Naive thymus-derived CD4-positive, alpha-beta T cell (primary cell): ENCODE measurements at regions of chr6 and their contacts with region 1.

Region 1: DNA sequence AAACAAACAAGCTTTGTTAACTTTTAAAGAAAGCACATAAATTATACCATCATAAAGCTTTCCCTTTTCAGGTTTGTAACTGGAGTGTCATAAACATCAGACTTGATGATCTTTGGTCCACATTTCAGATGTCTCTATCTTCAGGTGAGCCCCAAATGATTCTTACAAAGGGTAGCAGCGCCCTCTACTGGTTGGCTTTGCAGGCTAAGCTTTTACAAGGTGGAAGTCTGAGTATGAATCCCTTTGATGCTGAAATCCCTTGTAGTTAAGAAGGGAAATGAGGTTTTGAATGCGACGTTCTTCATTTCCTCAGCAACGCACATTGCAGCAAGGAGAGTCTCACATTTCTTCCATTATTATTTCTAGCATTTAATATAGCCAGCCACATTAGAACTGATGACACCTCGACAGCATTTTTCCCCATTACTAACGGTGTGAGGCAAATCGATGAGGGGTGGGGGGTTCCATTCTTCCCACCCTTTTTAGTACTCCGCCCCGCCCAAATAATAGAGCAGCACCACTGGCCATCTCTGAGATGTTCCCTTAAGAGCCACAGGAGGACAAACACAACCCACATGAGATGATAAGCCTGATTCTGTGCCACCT is 126.3 kb upstream of the NT5E start:
- DNase-seq: peak; percentile 17 to 67 (median 42)
- ATAC-seq: peak; percentile 54
- H3K4me3 ChIP-seq: no peak overlapping the region
- H3K4me3 Mint-ChIP-seq: no peak overlapping the region
- H3K27ac ChIP-seq: no peak overlapping the region
- H3K27ac Mint-ChIP-seq: peak overlapping the region in 1 of 9 donors; percentile 26
- H3K4me1 ChIP-seq: no peaks in the 10 kb centered on the region
- H3K4me1 Mint-ChIP-seq: peaks cover 0 to 5% (median 0%) of the 10 kb centered on the region in 7 donors
- H3K27me3 ChIP-seq: no peaks in the 10 kb centered on the region
- H3K27me3 Mint-ChIP-seq: peaks cover 0 to 16% (median 10%) of the 10 kb centered on the region in 5 donors

Region 2: DNA sequence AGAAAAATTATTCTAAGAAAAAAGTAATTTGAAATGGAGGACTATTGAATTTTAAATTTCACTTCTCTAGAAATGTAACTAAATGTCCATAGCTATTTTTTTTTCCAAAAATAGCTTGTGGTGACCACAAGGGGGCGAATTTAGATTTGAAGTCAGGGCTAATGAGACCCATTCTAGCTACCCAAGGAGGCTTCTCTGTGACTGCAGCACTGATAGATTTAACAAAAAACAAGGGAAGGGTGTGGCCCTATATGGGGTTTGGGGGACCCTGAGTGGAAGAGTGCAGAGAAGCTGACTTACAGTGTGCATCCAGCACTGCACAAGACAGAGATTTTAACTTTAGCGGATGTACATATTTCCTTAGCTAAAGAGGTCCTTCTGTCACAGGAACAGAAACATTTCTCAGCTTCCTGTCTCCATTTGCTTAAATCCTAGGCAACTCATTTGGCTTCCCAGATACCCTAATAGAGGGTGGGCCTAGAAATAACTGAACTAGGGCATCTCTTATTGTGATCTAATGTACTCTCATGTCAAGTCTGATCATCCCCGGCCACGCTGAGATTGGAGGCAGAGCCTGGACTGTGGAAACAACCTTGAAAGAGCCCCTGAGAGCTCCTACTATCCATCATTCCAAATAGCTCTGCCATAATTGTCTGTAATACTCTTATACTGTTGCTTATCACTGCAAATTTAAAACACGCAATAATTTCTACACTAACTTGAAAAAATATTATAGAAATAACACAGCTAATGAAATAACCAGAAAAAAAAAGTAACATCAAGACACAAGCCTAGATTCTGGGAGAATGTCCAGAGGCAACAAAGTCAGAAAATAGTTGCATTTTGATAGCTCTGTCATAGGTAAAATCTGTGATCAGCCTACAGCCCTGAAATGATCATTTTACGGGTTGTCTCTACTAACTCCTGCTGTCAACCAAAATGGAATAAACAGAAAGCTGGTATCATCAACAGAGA is 1708.2 kb before region 1 on chr6:
- CTCF ChIA-PET with region 1: interaction called, 4 read pairs
- POLR2A ChIA-PET with region 1: no interaction called
- intact Hi-C with region 1: loop called in 1 of 2 experiments (anchors 1 kb)
- DNase-seq: peak in 1 of 9 donors; percentile 2
- ATAC-seq: no peak
- H3K4me3 ChIP-seq: no peak overlapping the region
- H3K4me3 Mint-ChIP-seq: no peak overlapping the region
- H3K27ac ChIP-seq: no peak overlapping the region
- H3K27ac Mint-ChIP-seq: no peak overlapping the region
- H3K4me1 ChIP-seq: no peaks in the 10 kb centered on the region
- H3K4me1 Mint-ChIP-seq: no peaks in the 10 kb centered on the region
- H3K27me3 ChIP-seq: no peaks in the 10 kb centered on the region
- H3K27me3 Mint-ChIP-seq: peaks cover 0 to 6% (median 0%) of the 10 kb centered on the region in 5 donors

Region 3: DNA sequence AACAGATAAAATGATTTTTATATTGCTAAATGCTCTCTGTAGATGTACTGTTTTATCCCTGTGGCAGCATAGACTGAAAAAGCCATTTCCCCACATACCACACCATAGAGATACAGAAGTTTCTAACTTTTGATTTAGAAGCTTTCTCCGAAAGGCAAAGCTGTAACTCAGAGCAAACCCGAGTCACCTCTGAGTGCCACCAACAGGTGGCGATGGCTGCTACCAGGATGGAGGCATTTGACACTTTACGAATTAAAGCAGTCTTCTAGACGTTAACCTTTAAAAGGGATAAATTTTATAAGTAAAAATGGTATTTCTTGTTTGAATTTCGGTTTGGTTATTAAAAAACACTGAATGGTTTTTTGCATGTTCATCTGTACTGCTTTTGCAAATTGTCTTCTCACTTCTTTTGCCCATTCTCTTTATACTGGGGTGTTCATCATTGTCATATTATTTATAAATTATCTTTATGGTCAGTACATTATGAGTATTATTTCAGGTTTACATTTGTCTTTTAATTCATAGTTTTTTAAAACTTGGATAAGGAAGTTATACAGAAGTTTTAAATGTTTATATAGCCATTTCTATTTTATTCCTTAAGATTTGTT is 895.1 kb before region 1 on chr6:
- CTCF ChIA-PET with region 1: no interaction called
- POLR2A ChIA-PET with region 1: no interaction called
- intact Hi-C with region 1: loop called in 1 of 2 experiments (anchors 1 kb)
- DNase-seq: no peak
- ATAC-seq: no peak
- H3K4me3 ChIP-seq: no peak overlapping the region
- H3K4me3 Mint-ChIP-seq: no peak overlapping the region
- H3K27ac ChIP-seq: no peak overlapping the region
- H3K27ac Mint-ChIP-seq: no peak overlapping the region
- H3K4me1 ChIP-seq: no peaks in the 10 kb centered on the region
- H3K4me1 Mint-ChIP-seq: no peaks in the 10 kb centered on the region
- H3K27me3 ChIP-seq: no peaks in the 10 kb centered on the region
- H3K27me3 Mint-ChIP-seq: peaks cover 0 to 6% (median 4%) of the 10 kb centered on the region in 5 donors

Region 4: GRCh38 chr6:86031713-86032112 is 708.2 kb after region 1 on chr6:
- CTCF ChIA-PET with region 1: no interaction called
- POLR2A ChIA-PET with region 1: no interaction called
- intact Hi-C with region 1: no loop called
- DNase-seq: no peak
- ATAC-seq: no peak
- H3K4me3 ChIP-seq: no peak overlapping the region
- H3K4me3 Mint-ChIP-seq: no peak overlapping the region
- H3K27ac ChIP-seq: no peak overlapping the region
- H3K27ac Mint-ChIP-seq: no peak overlapping the region
- H3K4me1 ChIP-seq: no peaks in the 10 kb centered on the region
- H3K4me1 Mint-ChIP-seq: no peaks in the 10 kb centered on the region
- H3K27me3 ChIP-seq: no peaks in the 10 kb centered on the region
- H3K27me3 Mint-ChIP-seq: no peaks in the 10 kb centered on the region